A673 (cell line): ENCODE measurements at regions of chr4 and their contacts with region 1.

Region 1: DNA sequence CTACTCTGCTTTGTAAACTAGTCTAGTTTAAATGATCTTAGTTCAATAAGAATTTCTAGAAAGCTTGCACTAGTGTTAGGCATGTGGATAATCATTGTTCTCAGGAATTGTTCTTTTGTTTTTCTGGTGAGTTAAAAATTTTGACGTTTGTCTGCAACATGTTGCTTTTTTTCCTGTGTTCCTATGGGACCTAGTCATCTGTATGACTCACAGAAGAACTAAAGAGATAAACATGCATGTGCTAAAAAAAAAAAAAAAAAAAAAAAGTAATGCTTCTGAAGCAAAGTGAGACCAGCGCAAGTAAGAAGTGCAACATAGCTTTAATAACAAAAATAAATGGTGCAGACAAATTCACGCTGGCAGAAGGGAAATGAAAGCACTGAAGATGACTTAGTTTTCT is 471.2 kb downstream of the IQCM start:
- DNase-seq: peak; percentile 72
- H3K4me3 ChIP-seq: no peak overlapping the region
- H3K27ac ChIP-seq: peak overlapping the region; percentile 97
- H3K4me1 ChIP-seq: peaks cover 51% of the 10 kb centered on the region
- H3K27me3 ChIP-seq: no peaks in the 10 kb centered on the region
- CTCF ChIP-seq: no peak

Region 2: DNA sequence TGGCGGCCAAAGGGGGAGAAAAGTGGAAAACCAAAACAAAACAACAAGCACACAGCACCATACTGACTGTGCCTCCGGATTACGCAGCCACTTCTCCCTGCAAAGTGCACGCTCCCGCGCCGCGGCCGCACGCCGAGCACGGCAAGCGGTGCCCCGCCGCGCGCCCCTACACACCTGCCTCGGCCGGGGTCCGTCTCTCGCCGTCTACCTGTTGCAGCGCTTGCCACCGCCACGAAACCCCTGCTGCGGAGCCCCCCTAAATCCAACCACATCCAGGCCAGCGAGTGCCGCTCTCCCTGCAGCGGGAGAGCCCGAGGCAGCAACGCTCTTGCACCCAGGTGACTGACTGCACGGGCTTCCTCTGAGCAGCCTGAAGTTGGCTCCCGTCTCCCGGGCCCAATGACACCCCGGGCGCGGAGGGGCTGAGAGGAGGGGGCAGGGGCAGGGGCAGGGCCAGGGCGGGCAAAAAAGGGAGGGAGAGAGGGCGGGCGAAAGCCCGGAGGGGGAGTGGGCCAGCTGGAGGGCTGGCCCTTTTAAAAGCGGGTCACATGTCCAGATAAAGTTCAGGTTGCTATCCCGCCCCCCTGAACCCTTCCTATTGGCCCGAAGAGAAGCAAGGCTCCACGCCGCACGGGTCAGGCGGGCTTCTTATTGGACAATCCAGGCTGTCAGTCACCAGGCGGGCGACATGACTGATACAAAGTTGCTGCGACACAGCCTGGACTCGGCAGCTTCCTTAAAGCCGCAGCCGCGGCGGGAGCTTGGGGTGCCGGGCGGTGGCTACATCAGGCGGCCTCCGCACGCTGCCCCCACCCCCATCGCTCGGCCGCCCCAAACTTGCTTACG is 902.2 kb before region 1 on chr4 and contains the start of gene NR3C2:
- CTCF ChIA-PET with region 1: no interaction called
- POLR2A ChIA-PET with region 1: no interaction called
- intact Hi-C with region 1: loop called (anchors 10 kb)
- DNase-seq: peak; percentile 98
- H3K4me3 ChIP-seq: peak within 1 kb of the TSS; percentile 72
- H3K27ac ChIP-seq: peak within 1 kb of the TSS; percentile 43
- H3K4me1 ChIP-seq: peaks cover 13% of the 10 kb centered on the region
- H3K27me3 ChIP-seq: peaks cover 15% of the 10 kb centered on the region
- CTCF ChIP-seq: no peak
- total RNA-seq, gene NR3C2: 1.6 and 2.2 TPM in 2 replicates

Region 3: GRCh38 chr4:148608968-148609367 is 735.5 kb before region 1 on chr4:
- CTCF ChIA-PET with region 1: no interaction called
- POLR2A ChIA-PET with region 1: no interaction called
- intact Hi-C with region 1: no loop called
- DNase-seq: no peak
- H3K4me3 ChIP-seq: no peak overlapping the region
- H3K27ac ChIP-seq: no peak overlapping the region
- H3K4me1 ChIP-seq: no peaks in the 10 kb centered on the region
- H3K27me3 ChIP-seq: no peaks in the 10 kb centered on the region
- CTCF ChIP-seq: no peak

Region 4: GRCh38 chr4:148998719-148999118 is 345.7 kb before region 1 on chr4:
- CTCF ChIA-PET with region 1: no interaction called
- POLR2A ChIA-PET with region 1: no interaction called
- intact Hi-C with region 1: loop called (anchors 10 kb)
- DNase-seq: peak; percentile 64
- H3K4me3 ChIP-seq: no peak overlapping the region
- H3K27ac ChIP-seq: no peak overlapping the region
- H3K4me1 ChIP-seq: no peaks in the 10 kb centered on the region
- H3K27me3 ChIP-seq: no peaks in the 10 kb centered on the region
- CTCF ChIP-seq: peak; percentile 61

Region 5: GRCh38 chr4:149836546-149836945 is 492.1 kb after region 1 on chr4:
- CTCF ChIA-PET with region 1: no interaction called
- POLR2A ChIA-PET with region 1: no interaction called
- intact Hi-C with region 1: no loop called
- DNase-seq: no peak
- H3K4me3 ChIP-seq: no peak overlapping the region
- H3K27ac ChIP-seq: no peak overlapping the region
- H3K4me1 ChIP-seq: no peaks in the 10 kb centered on the region
- H3K27me3 ChIP-seq: no peaks in the 10 kb centered on the region
- CTCF ChIP-seq: no peak

Region 6: DNA sequence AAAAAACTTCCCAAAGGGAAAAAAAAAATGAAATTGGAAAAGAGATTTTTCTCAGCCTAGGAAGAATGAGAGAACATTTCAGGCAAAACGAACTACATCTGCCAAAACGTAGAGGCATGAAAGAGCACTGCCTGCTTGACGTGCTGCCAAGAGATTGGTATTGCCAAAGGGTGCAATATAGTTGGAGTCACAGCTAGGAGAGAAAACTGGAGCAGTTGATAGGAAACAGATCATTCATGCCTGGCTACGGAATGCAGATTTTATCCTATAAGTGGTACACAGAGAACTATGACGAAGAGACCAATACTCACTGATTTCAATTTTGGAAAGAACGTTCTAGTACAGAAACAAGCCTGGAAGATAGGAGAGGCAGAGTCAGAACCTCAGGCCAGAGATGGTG is 539.6 kb after region 1 on chr4:
- CTCF ChIA-PET with region 1: no interaction called
- POLR2A ChIA-PET with region 1: no interaction called
- intact Hi-C with region 1: loop called (anchors 5 kb)
- DNase-seq: peak; percentile 18
- H3K4me3 ChIP-seq: no peak overlapping the region
- H3K27ac ChIP-seq: no peak overlapping the region
- H3K4me1 ChIP-seq: no peaks in the 10 kb centered on the region
- H3K27me3 ChIP-seq: no peaks in the 10 kb centered on the region
- CTCF ChIP-seq: no peak